Heart right ventricle (tissue), 16 donors: ENCODE measurements at regions of chr19 and their contacts with region 1.

Region 1: GRCh38 chr19:7340959-7341837 is 7.5 kb upstream of the ARHGEF18 start:
- DNase-seq: peak; percentile 78 to 86
- ATAC-seq: peak; percentile 27 to 62 (median 56)
- H3K4me3 ChIP-seq: no peak overlapping the region
- H3K27ac ChIP-seq: peak overlapping the region in 1 of 10 donors; percentile 42
- H3K4me1 ChIP-seq: peaks cover 0 to 50% (median 6%) of the 10 kb centered on the region in 9 donors
- H3K27me3 ChIP-seq: peaks cover 0 to 18% (median 0%) of the 10 kb centered on the region in 7 donors
- CTCF ChIP-seq: peak; percentile 92 to 97 (median 95)

Region 2: GRCh38 chr19:6862673-6863078 is 478.5 kb before region 1 on chr19:
- intact Hi-C with region 1: loop called in 1 of 10 experiments (anchors 10 kb)
- DNase-seq: peak; percentile 75 to 78
- ATAC-seq: peak; percentile 81 to 97 (median 92)
- H3K4me3 ChIP-seq: peak overlapping the region in 8 of 10 donors; percentile 17 to 47 (median 35)
- H3K27ac ChIP-seq: peak overlapping the region in 1 of 10 donors; percentile 55
- H3K4me1 ChIP-seq: peaks cover 0 to 19% (median 0%) of the 10 kb centered on the region in 9 donors
- H3K27me3 ChIP-seq: peaks cover 0 to 13% (median 11%) of the 10 kb centered on the region in 7 donors
- CTCF ChIP-seq: peak; percentile 69 to 88 (median 83)

Region 3: DNA sequence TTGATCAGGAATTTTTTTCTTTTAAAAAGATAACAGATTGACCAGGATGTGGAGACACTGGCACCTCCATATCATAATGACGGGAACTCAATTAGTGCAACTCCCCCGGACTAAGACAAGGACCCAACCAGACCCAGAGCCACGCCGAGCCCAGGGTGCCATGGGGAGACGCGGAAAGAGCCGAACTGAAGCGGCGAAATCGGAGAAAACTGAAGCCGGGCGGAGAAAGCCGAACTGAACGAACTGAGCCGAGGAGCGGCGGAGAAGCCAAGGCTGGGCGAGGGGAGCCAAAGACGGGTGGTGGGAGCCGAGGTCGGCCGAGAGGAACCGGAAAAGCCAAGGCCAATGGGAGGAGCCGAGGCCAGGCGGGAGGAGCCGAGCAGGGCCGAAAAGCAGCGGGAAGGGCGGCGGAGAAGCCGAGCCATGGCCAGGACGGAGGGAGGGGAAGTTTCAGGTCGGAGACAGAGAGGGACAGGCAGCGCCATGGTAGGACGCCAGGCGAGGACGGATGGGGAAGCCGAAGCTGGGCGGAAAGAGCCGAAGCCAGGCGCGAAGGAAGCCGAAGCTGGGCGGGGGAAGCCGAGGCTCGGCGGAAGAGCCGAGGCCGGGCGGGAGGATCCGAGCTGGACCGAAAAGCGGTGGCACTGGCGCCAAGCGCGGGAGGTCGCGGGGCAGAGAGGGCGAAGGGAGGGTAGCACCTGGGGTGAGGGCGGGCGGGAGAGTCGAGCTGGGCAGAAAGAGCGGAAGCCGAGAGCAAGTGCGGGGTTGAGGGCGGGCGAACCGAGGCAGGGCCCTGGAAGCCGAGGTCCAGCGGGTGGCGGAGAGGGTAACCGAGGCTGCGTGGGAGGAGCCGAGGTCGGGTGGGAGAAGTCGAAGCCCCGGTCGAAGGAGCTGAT is 242.2 kb before region 1 on chr19:
- intact Hi-C with region 1: loop called in 9 of 10 experiments (anchors 1 to 5 kb)
- DNase-seq: peak; percentile 93 to 95
- ATAC-seq: peak; percentile 94 to 98 (median 96)
- H3K4me3 ChIP-seq: peak overlapping the region; percentile 46 to 89 (median 64)
- H3K27ac ChIP-seq: peak overlapping the region; percentile 83 to 99 (median 94)
- H3K4me1 ChIP-seq: peaks cover 0 to 18% (median 7%) of the 10 kb centered on the region in 9 donors
- H3K27me3 ChIP-seq: no peaks in the 10 kb centered on the region
- CTCF ChIP-seq: no peak

Region 4: DNA sequence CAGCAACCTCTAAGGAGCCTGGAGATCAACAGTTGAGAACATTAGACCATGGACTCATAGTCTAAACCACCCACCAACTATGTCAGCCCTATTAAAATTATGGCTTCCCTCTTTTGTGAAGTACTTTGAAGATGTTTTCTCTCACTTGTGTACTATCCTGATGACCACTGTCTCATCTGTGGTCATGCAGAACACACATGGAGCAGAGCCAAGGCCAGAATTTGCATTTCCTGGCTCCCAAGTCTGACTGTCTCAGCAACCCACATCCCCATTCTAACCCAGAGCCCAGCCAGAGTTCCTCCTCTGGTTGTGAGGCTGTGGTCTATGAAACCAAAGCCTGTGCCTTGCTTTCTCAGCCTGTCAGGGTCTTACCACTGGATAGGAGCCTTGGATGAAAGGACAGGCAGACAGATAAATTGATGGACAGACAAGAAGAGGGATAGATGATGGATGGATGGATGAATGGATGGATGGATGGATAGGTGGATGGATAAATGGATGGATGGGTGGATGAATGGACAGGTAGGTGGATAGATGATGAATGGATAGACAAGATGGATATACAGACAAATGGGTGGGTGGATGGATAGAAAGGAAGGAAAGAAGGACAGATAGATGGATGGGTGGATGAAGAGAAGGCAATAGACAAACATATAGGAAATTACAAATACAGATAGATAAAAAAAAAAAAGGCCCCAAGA is 236.3 kb before region 1 on chr19:
- intact Hi-C with region 1: loop called (anchors 1 to 5 kb)
- DNase-seq: no peak
- ATAC-seq: peak in 2 of 8 donors; percentile 8 to 26
- H3K4me3 ChIP-seq: no peak overlapping the region
- H3K27ac ChIP-seq: no peak overlapping the region
- H3K4me1 ChIP-seq: peaks cover 0 to 12% (median 1%) of the 10 kb centered on the region in 9 donors
- H3K27me3 ChIP-seq: no peaks in the 10 kb centered on the region
- CTCF ChIP-seq: no peak

Region 5: GRCh38 chr19:7152568-7152967 is 188.6 kb before region 1 on chr19:
- intact Hi-C with region 1: loop called (anchors 1 to 10 kb)
- DNase-seq: no peak
- ATAC-seq: no peak
- H3K4me3 ChIP-seq: no peak overlapping the region
- H3K27ac ChIP-seq: peak overlapping the region in 2 of 10 donors; percentile 40 to 41
- H3K4me1 ChIP-seq: peaks cover 0 to 8% (median 3%) of the 10 kb centered on the region in 9 donors
- H3K27me3 ChIP-seq: no peaks in the 10 kb centered on the region
- CTCF ChIP-seq: no peak

Region 6: DNA sequence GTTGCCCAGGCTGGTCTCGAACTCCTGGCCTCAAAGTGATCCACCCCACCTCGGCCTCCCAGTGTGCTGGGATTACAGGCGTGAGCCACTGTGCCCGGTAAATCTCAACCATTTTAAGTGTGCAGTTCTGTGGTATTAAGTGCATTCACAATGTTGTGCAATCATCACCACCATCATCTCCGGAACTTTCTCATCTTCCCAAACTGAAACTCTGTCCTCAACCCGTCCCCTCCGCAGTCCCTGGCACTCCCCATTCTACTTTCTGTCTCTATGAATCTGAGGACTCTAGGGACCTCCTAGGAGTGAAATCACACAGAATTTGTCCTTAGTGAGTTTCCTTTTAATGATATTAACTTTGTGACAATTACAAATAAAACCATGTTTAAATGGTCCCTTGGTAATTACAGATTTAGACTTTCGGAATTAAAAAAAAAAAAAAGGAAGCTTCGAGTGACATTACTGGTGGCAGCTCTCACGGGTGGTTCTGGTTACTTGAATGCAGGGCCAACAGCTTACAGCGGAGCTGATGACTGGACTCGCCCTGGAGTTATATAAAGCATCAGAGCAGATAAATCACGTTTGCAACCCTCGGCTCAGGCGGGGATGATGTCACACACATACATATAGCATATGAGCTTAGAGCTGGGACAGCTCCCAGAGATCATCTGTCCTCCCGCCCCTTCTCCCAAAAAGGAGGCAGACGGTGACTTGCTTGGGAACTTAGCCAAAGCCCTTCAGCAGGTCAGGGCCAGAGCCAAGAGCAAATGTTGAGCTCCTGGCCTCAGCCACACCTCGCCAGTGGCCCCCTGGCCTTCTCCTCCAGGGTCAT is 181.9 kb before region 1 on chr19:
- intact Hi-C with region 1: loop called in 3 of 10 experiments (anchors 5 to 10 kb)
- DNase-seq: peak; percentile 59 to 88
- ATAC-seq: peak; percentile 88 to 99 (median 97)
- H3K4me3 ChIP-seq: peak overlapping the region in 3 of 10 donors; percentile 3 to 29 (median 9)
- H3K27ac ChIP-seq: peak overlapping the region; percentile 46 to 93 (median 88)
- H3K4me1 ChIP-seq: peaks cover 0 to 32% (median 16%) of the 10 kb centered on the region in 9 donors
- H3K27me3 ChIP-seq: no peaks in the 10 kb centered on the region
- CTCF ChIP-seq: no peak

Region 7: GRCh38 chr19:7355151-7355820 is 14.1 kb after region 1 on chr19:
- intact Hi-C with region 1: no loop called
- DNase-seq: no peak
- ATAC-seq: no peak
- H3K4me3 ChIP-seq: no peak overlapping the region
- H3K27ac ChIP-seq: no peak overlapping the region
- H3K4me1 ChIP-seq: peaks cover 0 to under 1% (median 0%) of the 10 kb centered on the region in 9 donors
- H3K27me3 ChIP-seq: no peaks in the 10 kb centered on the region
- CTCF ChIP-seq: no peak

Region 8: DNA sequence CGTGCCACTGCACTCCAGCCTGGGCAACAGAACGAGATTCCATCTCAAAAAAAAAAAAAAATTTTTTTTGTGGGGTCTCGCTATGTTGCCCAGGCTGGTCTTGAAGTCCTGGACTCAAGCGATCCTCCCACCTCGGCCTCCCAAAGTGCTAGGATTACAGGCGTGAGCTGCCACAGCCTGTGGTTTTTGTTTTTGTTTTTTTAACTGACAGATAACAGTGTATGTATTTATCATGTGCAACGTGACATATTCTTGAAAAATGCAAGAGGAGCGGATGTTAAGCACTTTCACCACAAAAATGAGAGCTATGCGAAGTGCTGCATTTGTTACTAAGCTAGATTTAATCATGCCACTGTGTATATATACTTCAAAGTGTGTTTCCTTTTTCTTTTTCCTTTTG is 56.5 kb after region 1 on chr19:
- intact Hi-C with region 1: no loop called
- DNase-seq: no peak
- ATAC-seq: no peak
- H3K4me3 ChIP-seq: no peak overlapping the region
- H3K27ac ChIP-seq: no peak overlapping the region
- H3K4me1 ChIP-seq: peaks cover 0 to 38% (median 20%) of the 10 kb centered on the region in 9 donors
- H3K27me3 ChIP-seq: no peaks in the 10 kb centered on the region
- CTCF ChIP-seq: no peak